Activated CD4-positive, alpha-beta T cell treated with anti-CD3 and anti-CD28 coated beads, Interleukin-2, amount 10 ng/mL, durations not matched to agents 24 days and 14 days (primary cell): ENCODE measurements at regions of chr5 and their contacts with region 1.

Region 1: DNA sequence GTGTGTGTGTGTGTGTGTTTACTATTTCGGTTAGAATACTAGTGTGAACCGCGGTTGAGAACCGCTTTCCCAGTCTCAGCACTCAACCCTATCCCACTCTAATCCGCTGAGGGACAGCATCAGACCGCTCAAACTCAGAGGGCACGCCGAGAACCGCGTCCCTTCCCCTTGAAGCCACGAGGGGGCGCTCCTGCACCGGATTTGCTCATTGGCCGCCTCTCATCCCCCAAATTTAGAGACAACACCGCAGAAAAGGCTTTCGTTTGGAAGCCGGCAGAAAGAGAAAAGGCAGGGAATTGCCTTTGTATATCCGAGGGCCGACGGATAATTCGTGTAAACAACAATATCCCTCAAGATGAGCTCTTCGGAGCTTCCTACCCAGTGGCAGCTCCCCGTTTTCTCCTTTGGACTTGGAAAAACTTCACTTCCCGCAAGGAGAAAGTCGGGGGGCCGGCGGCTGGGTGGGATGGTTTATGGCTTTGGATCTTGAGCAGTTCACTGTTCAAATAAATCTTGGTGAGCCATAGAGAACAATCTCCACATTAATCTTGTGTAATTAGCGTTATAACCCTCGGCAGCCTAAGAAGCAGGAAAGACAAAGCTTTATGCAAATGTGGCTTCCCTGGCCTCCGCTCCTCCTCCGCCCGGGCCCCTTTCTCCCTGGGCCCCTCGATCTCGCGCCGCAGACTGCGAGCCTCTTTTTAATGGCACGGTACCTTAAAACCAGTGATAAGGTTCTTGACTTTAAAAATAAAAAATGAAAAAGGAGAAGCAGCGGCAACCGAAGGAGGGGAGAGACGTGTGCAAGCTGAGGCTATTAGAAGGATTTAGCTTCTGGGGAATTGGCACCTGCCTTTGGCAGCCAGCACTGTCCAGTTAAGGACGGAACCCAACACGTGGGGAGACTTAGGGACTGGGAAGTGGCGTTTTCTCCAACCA is 296.8 kb downstream of the PARP8 start:
- DNase-seq: peak; percentile 89
- H3K4me3 Mint-ChIP-seq: peak overlapping the region; percentile 79
- H3K27ac Mint-ChIP-seq: peak overlapping the region; percentile 34
- H3K4me1 Mint-ChIP-seq: peaks cover 30% of the 10 kb centered on the region
- H3K27me3 Mint-ChIP-seq: peaks cover 56% of the 10 kb centered on the region

Region 2: DNA sequence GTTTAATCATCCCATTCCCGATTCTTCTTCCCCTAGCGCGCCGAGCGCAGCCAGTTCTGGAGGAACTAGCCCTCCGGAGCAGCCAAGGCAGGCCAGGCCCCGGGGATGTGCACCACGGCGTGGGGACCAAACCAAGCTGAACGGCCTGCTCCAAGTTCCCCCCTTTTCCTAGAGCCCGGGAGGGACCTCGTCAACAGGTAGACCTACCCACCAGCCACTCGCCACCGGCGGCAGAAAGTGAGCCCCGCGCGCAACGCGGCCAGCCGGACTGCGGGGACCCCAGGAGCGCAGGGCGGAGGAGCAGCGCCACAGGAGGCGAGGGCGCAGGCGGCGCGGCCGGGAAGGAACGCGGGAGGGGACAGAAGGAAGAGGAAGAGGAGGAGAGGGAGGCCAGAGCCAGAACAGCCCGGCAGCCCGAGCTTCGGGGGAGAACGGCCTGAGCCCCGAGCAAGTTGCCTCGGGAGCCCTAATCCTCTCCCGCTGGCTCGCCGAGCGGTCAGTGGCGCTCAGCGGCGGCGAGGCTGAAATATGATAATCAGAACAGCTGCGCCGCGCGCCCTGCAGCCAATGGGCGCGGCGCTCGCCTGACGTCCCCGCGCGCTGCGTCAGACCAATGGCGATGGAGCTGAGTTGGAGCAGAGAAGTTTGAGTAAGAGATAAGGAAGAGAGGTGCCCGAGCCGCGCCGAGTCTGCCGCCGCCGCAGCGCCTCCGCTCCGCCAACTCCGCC is 419.7 kb after region 1 on chr5 and contains the start of gene ISL1:
- intact Hi-C with region 1: loop called (anchors 2 kb)
- DNase-seq: no peak
- H3K4me3 Mint-ChIP-seq: peak within 1 kb of the TSS; percentile 57
- H3K27ac Mint-ChIP-seq: peak within 1 kb of the TSS; percentile 56
- H3K4me1 Mint-ChIP-seq: peaks cover 4% of the 10 kb centered on the region
- H3K27me3 Mint-ChIP-seq: peaks cover 96% of the 10 kb centered on the region
- total RNA-seq, gene ISL1: not detected in 2 replicates

Region 3: GRCh38 chr5:52007230-52007858 is 1044.1 kb after region 1 on chr5:
- intact Hi-C with region 1: loop called (anchors 5 kb)
- DNase-seq: no peak
- H3K4me3 Mint-ChIP-seq: no peak overlapping the region
- H3K27ac Mint-ChIP-seq: no peak overlapping the region
- H3K4me1 Mint-ChIP-seq: no peaks in the 10 kb centered on the region
- H3K27me3 Mint-ChIP-seq: no peaks in the 10 kb centered on the region

Region 4: DNA sequence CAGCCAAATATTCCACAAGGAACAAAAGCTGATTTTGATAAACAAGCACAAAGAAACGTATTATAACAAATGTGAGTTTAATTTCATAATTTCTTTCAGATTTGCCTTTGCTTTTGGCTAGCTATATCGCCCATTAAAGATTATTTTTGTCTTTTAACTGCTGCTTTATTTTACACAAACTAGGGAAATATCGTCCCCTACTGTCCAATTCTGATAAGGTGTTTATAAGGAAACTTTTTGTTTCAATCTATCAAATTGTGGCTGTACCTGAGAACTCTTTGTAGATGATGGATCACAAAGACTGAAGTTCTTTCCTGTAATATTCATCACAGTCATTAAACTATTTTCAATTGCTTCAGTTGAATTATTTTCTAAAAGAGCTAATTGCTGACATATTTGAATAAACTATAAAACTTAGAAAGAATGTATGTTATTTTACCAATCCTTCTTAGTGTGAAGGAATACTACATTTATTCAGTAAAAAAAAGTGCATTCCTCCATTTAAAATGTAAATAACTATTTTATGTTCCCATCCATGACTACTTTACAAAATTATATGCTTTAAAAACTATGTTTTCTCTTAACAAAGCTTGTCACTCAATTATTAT is 1393.2 kb after region 1 on chr5:
- intact Hi-C with region 1: loop called (anchors 10 kb)
- DNase-seq: no peak
- H3K4me3 Mint-ChIP-seq: no peak overlapping the region
- H3K27ac Mint-ChIP-seq: no peak overlapping the region
- H3K4me1 Mint-ChIP-seq: no peaks in the 10 kb centered on the region
- H3K27me3 Mint-ChIP-seq: no peaks in the 10 kb centered on the region

Region 5: GRCh38 chr5:52560366-52560765 is 1597.2 kb after region 1 on chr5:
- intact Hi-C with region 1: loop called (anchors 10 kb)
- DNase-seq: no peak
- H3K4me3 Mint-ChIP-seq: no peak overlapping the region
- H3K27ac Mint-ChIP-seq: no peak overlapping the region
- H3K4me1 Mint-ChIP-seq: no peaks in the 10 kb centered on the region
- H3K27me3 Mint-ChIP-seq: peaks cover 10% of the 10 kb centered on the region

Region 6: DNA sequence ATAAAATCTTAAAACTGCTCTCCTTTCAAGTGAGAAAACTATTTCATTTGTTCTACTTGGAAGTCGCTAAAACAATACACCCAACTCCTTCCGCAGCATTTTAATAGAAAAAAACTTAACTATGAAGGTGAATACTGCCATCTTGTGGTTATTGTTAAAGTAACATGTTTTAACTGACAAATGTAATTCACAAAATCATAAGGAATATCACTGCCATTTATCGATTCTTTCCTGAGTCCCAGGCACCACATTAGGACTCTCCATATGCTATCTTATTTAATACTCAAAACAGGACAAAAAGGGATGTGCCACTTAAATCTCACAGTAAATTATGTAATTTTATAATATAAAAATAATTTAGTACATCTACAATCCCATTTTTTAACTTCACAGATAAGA is 1694.0 kb after region 1 on chr5:
- intact Hi-C with region 1: loop called (anchors 1 kb)
- DNase-seq: no peak
- H3K4me3 Mint-ChIP-seq: no peak overlapping the region
- H3K27ac Mint-ChIP-seq: no peak overlapping the region
- H3K4me1 Mint-ChIP-seq: no peaks in the 10 kb centered on the region
- H3K27me3 Mint-ChIP-seq: peaks cover 34% of the 10 kb centered on the region

Region 7: DNA sequence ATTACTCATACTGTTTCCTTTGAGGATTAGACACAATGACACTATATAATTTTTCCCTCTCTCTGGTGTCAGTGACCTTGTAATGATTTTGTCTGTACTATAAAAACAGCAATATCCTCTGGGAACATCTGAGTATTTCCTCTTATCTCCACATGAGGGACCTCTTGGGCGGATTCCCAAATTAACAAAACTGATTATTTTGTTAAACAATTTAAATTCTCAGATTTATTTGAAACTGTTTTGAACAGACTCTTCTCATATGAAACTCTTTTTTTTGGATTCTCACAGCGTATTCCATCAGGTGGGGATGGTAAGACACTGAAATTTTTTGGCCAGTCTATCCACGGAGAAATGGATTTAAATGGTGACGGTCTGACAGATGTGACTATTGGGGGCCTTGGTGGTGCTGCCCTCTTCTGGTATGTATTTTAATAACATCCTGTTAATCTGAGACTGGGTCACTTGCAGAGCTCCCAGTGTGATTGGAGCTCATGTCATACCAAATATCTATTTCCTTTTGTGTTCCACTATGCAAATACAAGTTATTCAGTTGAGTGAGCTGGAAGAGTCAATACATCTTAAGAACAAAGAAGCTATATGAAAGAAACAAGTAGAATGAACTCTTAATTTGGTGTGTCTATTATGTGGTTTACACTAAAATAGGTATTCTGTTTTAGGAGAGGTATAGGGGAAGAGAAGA is 1952.1 kb after region 1 on chr5:
- intact Hi-C with region 1: loop called (anchors 10 kb)
- DNase-seq: peak; percentile 87
- H3K4me3 Mint-ChIP-seq: peak overlapping the region; percentile 57
- H3K27ac Mint-ChIP-seq: no peak overlapping the region
- H3K4me1 Mint-ChIP-seq: peaks cover 8% of the 10 kb centered on the region
- H3K27me3 Mint-ChIP-seq: peaks cover 10% of the 10 kb centered on the region